Activated T-helper 1 cell treated with anti-CD3 and anti-CD28 coated beads, Interleukin-12 subunit alpha, Interleukin-12 subunit beta, Interleukin-2, Interleukin-4 antibody, amounts not matched to agents 30 ng/mL and 10 ng/mL and 1 ng/mL, durations not matched to agents 14 hours and 24 hours and 36 hours (primary cell): ENCODE measurements at regions of chr22 and their contacts with region 1.

Region 1: DNA sequence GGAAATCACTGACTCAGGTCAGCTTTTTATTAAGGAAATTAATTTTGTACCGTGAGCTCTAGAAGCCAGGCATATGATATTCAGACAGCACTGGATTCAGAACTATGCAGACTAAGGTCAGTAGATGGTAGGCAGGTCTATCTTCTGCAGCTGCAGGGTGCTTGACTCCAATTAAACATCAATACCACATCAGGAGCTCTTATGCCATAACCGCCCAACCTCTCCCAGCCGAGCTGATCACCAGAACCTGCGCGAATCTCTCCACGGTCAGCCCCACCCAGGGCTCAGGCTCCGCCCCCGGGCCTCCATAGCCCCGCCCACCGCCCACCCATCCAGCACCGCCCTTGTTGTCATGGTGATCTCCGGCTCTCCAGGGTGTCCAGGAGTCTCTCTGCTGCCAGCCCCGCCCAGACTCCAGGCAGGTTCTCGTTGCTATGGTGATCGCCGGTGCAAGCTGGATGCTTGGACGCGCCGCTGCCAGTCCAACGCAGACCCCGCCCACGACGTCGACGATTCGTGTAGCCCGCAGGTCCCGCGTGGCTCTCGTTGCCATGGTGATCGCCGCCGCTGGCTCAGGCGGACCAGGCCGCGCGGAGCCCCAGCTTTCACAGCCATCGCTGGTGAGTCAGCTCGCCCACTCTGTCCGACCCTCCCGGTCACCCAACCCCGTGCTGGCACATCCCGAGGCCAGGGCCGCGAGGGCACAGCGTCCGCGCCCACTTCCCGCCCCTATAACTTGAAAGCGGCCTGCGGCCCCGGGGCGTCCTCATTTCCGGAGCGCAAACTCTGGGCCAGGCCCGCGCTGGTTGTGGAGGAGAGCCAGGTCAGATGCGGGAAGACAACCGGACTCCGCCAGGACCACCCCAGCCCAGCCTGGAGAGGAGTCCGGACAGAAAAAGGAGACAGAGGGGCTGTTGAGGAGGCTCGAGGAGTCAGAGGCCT is at the start of gene RAB36:
- DNase-seq: peak; percentile 86
- H3K4me3 Mint-ChIP-seq: peak within 1 kb of the TSS; percentile 72
- H3K27ac Mint-ChIP-seq: peak within 1 kb of the TSS; percentile 70
- H3K4me1 Mint-ChIP-seq: peaks cover 23% of the 10 kb centered on the region
- H3K27me3 Mint-ChIP-seq: peaks cover 6% of the 10 kb centered on the region
- total RNA-seq, gene RAB36: 0.08 TPM in 1 of 2 replicates, not detected in the other

Region 2: GRCh38 chr22:22865311-22866072 is 279.7 kb before region 1 on chr22:
- intact Hi-C with region 1: loop called (anchors 5 kb)
- DNase-seq: peak; percentile 27
- H3K4me3 Mint-ChIP-seq: no peak overlapping the region
- H3K27ac Mint-ChIP-seq: peak overlapping the region; percentile 55
- H3K4me1 Mint-ChIP-seq: peaks cover 35% of the 10 kb centered on the region
- H3K27me3 Mint-ChIP-seq: peaks cover 55% of the 10 kb centered on the region

Region 3: GRCh38 chr22:23012081-23012622 is 133.1 kb before region 1 on chr22:
- intact Hi-C with region 1: loop called (anchors 1 kb)
- DNase-seq: peak; percentile 21
- H3K4me3 Mint-ChIP-seq: no peak overlapping the region
- H3K27ac Mint-ChIP-seq: peak overlapping the region; percentile 55
- H3K4me1 Mint-ChIP-seq: peaks cover 30% of the 10 kb centered on the region
- H3K27me3 Mint-ChIP-seq: peaks cover 41% of the 10 kb centered on the region

Region 4: GRCh38 chr22:23069502-23070357 is 75.5 kb before region 1 on chr22:
- intact Hi-C with region 1: loop called (anchors 5 kb)
- DNase-seq: peak; percentile 81
- H3K4me3 Mint-ChIP-seq: peak overlapping the region; percentile 79
- H3K27ac Mint-ChIP-seq: no peak overlapping the region
- H3K4me1 Mint-ChIP-seq: no peaks in the 10 kb centered on the region
- H3K27me3 Mint-ChIP-seq: peaks cover 39% of the 10 kb centered on the region

Region 5: DNA sequence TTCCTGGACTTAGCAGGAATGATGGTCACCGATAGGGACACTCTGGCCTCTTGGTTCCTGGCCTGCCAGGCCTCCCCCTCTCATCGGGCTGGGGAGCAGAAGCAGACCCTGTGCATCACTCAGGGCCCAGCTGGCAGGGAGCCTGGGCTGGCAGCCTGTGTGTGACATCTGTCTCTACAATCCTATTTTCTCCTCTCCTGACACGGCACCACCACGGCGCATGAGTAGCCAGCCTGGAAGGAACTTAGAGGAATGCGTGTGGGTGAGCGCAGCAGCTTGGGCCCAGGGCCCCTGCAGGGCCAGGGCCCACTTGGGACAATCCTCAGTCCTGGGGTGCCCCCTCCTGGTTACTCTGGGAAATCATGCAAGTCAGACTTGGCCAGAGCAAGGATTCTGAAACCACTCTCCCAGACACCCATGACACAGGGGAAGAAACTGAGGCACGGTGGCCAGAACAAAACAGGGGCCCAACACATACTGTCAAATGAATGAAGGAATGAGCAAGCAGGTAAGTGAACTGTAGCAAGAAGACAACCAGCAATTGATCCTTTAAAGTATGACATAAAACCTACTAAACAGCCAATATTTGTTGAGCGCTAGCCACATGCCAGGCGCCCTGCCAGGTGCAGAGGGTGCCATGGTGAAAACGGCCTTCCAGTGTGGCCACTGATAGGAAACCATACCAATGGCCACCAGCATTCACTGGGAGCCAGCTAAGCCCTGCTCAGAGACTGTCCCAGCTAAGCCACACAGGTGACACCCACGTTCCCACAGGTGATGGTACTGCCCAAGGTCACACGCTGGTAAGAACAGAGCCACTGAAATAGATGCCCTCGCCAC is 16.7 kb before region 1 on chr22:
- intact Hi-C with region 1: no loop called
- DNase-seq: peak; percentile 55
- H3K4me3 Mint-ChIP-seq: no peak overlapping the region
- H3K27ac Mint-ChIP-seq: no peak overlapping the region
- H3K4me1 Mint-ChIP-seq: no peaks in the 10 kb centered on the region
- H3K27me3 Mint-ChIP-seq: peaks cover 3% of the 10 kb centered on the region

Region 6: GRCh38 chr22:23178512-23179254 is 33.5 kb after region 1 on chr22:
- intact Hi-C with region 1: loop called (anchors 1 kb)
- DNase-seq: peak; percentile 42
- H3K4me3 Mint-ChIP-seq: peak overlapping the region; percentile 85
- H3K27ac Mint-ChIP-seq: peak overlapping the region; percentile 33
- H3K4me1 Mint-ChIP-seq: peaks cover 50% of the 10 kb centered on the region
- H3K27me3 Mint-ChIP-seq: no peaks in the 10 kb centered on the region

Region 7: GRCh38 chr22:23219822-23220484 is 74.8 kb after region 1 on chr22:
- intact Hi-C with region 1: loop called (anchors 1 kb)
- DNase-seq: peak; percentile 57
- H3K4me3 Mint-ChIP-seq: peak overlapping the region; percentile 76
- H3K27ac Mint-ChIP-seq: peak overlapping the region; percentile 94
- H3K4me1 Mint-ChIP-seq: peaks cover 92% of the 10 kb centered on the region
- H3K27me3 Mint-ChIP-seq: no peaks in the 10 kb centered on the region

Region 8: DNA sequence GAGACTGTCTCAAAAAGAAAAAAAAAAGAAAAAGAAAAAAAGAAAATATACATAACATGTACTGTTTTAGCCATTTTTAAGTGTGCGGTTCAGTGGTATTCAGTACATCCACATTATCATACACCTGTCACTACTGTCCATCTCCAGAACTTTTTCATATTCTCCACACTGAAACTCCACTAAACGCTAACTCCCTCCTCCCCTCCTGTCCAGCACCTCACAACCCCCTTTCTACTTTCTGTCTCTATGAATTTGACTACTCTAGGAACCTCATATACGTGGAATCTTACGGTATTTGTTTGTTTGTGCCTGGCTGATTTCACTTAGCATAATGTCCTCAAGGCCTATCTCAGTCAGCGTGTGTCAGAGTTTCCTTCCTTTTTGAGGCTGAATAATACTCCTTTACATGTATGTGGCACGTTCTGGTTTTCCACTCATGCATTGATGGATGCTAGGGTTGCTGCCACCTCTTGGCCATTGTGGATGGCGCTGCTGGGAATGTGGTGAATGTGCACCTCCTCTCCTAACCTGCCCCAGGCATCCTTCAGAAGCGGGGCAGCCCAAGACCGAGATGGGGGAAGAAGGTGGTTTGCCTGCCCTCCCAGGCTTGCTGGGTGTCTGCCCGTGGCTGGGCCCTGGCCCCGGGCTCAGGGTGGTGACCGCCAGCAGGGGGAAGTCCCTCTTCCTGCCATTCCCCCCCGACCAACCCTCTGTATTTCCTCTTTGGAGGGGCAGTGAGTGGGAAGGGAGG is 95.6 kb after region 1 on chr22:
- intact Hi-C with region 1: loop called (anchors 1 kb)
- DNase-seq: no peak
- H3K4me3 Mint-ChIP-seq: peak overlapping the region; percentile 21
- H3K27ac Mint-ChIP-seq: peak overlapping the region; percentile 91
- H3K4me1 Mint-ChIP-seq: peaks cover 75% of the 10 kb centered on the region
- H3K27me3 Mint-ChIP-seq: no peaks in the 10 kb centered on the region